ENCODE measurements at regions of chr11 and their contacts with region 1.

Region 1: GRCh38 chr11:46034041-46034440 is 87.2 kb downstream of the PHF21A start:
- DNase-seq: no peak
- H3K4me3 ChIP-seq: no peak overlapping the region
- H3K27ac ChIP-seq: no peak overlapping the region
- H3K4me1 ChIP-seq: no peaks in the 10 kb centered on the region
- H3K27me3 ChIP-seq: no peaks in the 10 kb centered on the region
- CTCF ChIP-seq: no peak

Region 2: DNA sequence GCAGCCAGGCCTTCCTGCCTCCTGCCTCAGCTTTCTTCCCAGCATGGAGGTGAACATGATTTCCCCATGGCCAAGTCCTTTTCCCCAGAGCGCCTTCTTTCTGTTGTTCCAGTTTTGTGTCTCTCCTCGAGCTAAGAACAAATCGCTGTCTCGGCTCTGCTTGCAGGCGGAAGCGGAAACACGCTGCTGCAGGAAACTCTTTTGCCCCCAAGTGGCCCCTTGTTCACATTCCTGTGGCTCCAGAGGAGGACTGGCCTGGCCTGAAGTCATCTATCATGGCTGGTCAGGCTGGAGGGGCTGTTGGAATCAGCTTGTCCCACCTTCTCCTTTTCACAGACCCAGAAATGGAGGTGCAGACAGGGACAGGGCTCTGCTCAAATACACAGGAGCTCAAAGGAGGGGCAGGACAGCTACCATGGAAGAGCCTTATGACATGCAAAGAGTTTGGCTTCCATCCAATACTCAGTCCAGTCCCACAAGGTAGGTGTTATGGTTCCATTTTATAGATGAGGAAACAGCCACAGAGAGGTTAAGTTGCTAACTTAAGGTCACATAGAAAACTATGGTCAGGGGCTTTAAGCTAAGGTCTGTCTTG is 565.7 kb before region 1 on chr11:
- CTCF ChIA-PET with region 1: no interaction called
- POLR2A ChIA-PET with region 1: no interaction called
- intact Hi-C with region 1: no loop called
- DNase-seq: no peak
- H3K4me3 ChIP-seq: no peak overlapping the region
- H3K27ac ChIP-seq: no peak overlapping the region
- H3K4me1 ChIP-seq: no peaks in the 10 kb centered on the region
- H3K27me3 ChIP-seq: no peaks in the 10 kb centered on the region
- CTCF ChIP-seq: no peak

Region 3: GRCh38 chr11:45982656-45983470 is 51.2 kb before region 1 on chr11:
- CTCF ChIA-PET with region 1: no interaction called
- POLR2A ChIA-PET with region 1: no interaction called
- intact Hi-C with region 1: loop called (anchors 5 kb)
- DNase-seq: peak; percentile 96
- H3K4me3 ChIP-seq: peak overlapping the region; percentile 11
- H3K27ac ChIP-seq: peak overlapping the region; percentile 83
- H3K4me1 ChIP-seq: peaks cover 46% of the 10 kb centered on the region
- H3K27me3 ChIP-seq: no peaks in the 10 kb centered on the region
- CTCF ChIP-seq: no peak